ENCODE measurements at regions of chr1 and their contacts with region 1.

Region 1: DNA sequence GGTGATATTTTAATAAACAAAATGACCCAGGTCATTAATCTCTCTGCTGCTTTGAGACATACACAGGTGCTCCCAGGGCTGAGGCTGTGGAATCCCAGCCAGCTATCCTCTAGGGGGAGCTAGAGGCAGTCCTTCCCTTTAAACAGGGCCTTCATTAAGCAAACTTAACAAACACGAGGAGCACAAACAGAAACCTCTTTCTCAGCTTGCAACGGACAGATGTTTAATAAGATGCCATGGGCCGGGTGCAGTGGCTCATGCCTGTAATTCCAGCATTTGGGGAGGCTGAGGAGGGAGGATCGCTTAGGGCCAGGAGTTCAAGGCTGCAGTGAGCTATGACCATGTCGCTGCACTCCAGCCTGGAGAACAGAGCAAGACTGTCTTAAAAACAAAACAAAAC is 106.7 kb downstream of the HIVEP3 start:
- DNase-seq: peak; percentile 49 to 64 (median 60)
- H3K4me3 ChIP-seq: no peak overlapping the region
- H3K4me3 Mint-ChIP-seq: peak overlapping the region in 6 of 8 donors; percentile 12 to 51 (median 39)
- H3K27ac ChIP-seq: no peak overlapping the region
- H3K27ac Mint-ChIP-seq: peak overlapping the region in 4 of 7 donors; percentile 5 to 32 (median 20)
- H3K4me1 ChIP-seq: peaks cover 25% of the 10 kb centered on the region
- H3K4me1 Mint-ChIP-seq: peaks cover 27 to 51% (median 30%) of the 10 kb centered on the region in 4 donors
- H3K27me3 ChIP-seq: no peaks in the 10 kb centered on the region
- H3K27me3 Mint-ChIP-seq: no peaks in the 10 kb centered on the region

Region 2: DNA sequence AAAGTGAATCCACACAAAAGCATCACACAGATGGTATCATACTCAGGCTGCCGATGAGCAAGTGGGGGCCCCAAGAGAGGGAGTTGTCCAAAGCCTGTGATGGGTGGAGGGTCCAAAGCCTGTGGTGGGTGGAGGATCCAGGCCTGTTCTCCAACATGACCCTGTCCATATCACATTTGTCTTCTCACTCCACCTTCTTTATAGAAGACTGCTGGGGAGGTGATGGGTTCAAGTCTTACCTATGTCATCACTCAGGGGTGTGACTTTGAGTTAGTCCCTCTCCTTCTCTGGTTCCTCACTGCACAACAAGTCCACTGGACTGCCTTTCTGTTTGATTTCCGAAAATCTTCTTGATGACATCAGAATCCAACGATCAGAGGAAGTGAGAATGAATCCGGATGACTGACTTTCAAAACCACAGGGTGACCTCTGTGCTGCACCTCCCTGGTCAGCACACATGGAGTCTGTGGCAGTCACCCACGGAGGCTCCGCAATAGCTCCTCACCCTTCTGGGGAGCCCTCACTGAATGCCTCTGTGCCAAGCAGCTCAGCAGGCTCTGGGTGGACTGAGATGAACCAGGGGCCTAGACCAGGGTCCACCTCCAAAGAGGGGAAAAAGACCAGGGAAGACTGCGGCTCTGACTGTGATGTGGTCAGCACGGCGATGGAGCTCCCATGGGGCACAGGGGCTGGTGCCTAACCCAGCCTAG is 60.1 kb before region 1 on chr1:
- CTCF ChIA-PET with region 1: interaction called, 5 read pairs
- POLR2A ChIA-PET with region 1: no interaction called
- intact Hi-C with region 1: loop called (anchors 2 kb)
- DNase-seq: no peak
- H3K4me3 ChIP-seq: no peak overlapping the region
- H3K4me3 Mint-ChIP-seq: peak overlapping the region in 4 of 8 donors; percentile 73 to 77 (median 75)
- H3K27ac ChIP-seq: no peak overlapping the region
- H3K27ac Mint-ChIP-seq: peak overlapping the region in 5 of 7 donors; percentile 72 to 92 (median 84)
- H3K4me1 ChIP-seq: peaks cover 44% of the 10 kb centered on the region
- H3K4me1 Mint-ChIP-seq: peaks cover 27 to 54% (median 40%) of the 10 kb centered on the region in 4 donors
- H3K27me3 ChIP-seq: no peaks in the 10 kb centered on the region
- H3K27me3 Mint-ChIP-seq: peaks cover 0 to 1% of the 10 kb centered on the region in 2 donors

Region 3: GRCh38 chr1:41823471-41823870 is 11.4 kb after region 1 on chr1:
- CTCF ChIA-PET with region 1: no interaction called
- POLR2A ChIA-PET with region 1: no interaction called
- intact Hi-C with region 1: no loop called
- DNase-seq: no peak
- H3K4me3 ChIP-seq: no peak overlapping the region
- H3K4me3 Mint-ChIP-seq: no peak overlapping the region
- H3K27ac ChIP-seq: no peak overlapping the region
- H3K27ac Mint-ChIP-seq: no peak overlapping the region
- H3K4me1 ChIP-seq: peaks cover 7% of the 10 kb centered on the region
- H3K4me1 Mint-ChIP-seq: peaks cover 0 to 13% (median 11%) of the 10 kb centered on the region in 4 donors
- H3K27me3 ChIP-seq: no peaks in the 10 kb centered on the region
- H3K27me3 Mint-ChIP-seq: no peaks in the 10 kb centered on the region

Measured in CD4-positive, alpha-beta memory T cell (primary cell).